ENCODE measurements at regions of chr1 and their contacts with region 1.

Region 1: DNA sequence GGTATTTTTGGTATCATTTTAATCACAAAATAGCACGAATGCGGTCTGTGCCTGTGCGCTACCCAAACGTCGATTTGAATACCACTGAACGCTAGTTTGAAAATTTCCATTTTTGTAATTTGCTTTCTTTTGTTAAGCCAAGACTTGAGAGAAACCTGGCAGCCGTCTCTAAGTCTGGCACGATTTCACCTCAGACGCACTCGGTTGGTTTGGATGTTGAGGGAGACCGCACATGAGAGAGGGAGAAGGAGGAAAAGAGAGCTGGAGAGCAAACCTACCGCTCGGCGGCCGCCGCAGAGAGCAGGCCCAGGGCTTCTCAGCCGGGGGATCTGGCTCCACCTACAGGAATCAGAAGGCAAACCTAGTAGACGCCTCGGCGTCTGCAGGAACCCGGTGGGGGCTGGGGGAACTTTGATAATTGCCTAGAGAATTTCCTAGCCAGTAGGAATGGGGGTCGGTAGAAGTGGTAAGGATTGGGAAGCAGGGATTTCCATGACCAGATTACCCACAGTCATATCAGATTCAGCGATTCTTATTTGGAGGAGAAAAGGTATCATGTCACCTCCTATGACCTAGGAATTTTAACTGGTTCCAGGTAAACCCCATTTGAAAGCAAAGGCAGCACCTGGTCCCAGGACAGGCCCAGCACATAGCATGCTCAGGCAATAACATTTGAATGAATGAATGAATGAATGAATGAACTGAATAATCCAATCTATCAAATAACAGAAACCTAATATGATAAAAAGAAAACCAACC is 83.2 kb downstream of the TM2D1 start:
- DNase-seq: peak; percentile 92
- ATAC-seq: peak; percentile 79

Region 2: DNA sequence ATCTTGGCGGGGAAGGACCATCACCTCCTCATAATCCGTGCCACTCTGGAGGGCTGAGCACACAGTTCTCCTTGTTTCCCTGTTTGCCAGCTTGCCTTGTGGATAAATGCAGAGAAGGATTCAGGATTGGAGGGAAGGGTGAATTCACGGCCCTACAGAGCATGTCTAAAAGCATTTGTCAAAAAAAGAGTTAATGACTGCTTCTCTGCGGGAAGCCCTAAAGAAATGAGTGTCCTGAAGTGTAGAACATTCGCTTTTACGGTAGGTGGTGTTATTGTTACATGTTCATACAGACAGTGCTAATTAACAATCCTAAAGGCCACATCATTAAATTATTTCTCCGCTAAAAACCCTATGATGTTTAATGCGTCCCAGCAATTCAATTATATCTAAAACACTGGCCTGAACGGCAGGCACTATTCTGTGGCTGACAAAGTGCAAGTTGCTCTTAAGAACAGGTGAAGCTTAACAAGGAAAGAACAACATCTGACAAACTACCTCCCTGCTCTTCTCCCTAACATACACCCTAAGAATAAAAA is 671.7 kb before region 1 on chr1:
- intact Hi-C with region 1: loop called (anchors 5 kb)
- DNase-seq: no peak
- ATAC-seq: peak; percentile 69

Region 3: GRCh38 chr1:61491497-61491896 is 150.3 kb before region 1 on chr1:
- intact Hi-C with region 1: loop called (anchors 10 kb)
- DNase-seq: no peak
- ATAC-seq: peak; percentile 93

Region 4: GRCh38 chr1:61591351-61591750 is 50.4 kb before region 1 on chr1:
- intact Hi-C with region 1: no loop called
- DNase-seq: no peak
- ATAC-seq: peak; percentile 76

Region 5: GRCh38 chr1:61606448-61607312 is 35.1 kb before region 1 on chr1:
- intact Hi-C with region 1: loop called (anchors 2 kb)
- DNase-seq: peak; percentile 84
- ATAC-seq: peak; percentile 97

Region 6: GRCh38 chr1:61865646-61866231 is 224.0 kb after region 1 on chr1:
- intact Hi-C with region 1: no loop called
- DNase-seq: no peak
- ATAC-seq: peak; percentile 75